ENCODE measurements at regions of chr21 and their contacts with region 1.

Region 1: GRCh38 chr21:38355992-38356797 is 99.4 kb downstream of the KCNJ15 start:
- DNase-seq: peak; percentile 85
- CTCF ChIP-seq: peak; percentile 88

Region 2: GRCh38 chr21:37711836-37712568 is 644.2 kb before region 1 on chr21:
- CTCF ChIA-PET with region 1: interaction called, 18 read pairs
- POLR2A ChIA-PET with region 1: no interaction called
- DNase-seq: peak; percentile 71
- CTCF ChIP-seq: peak; percentile 91

Region 3: GRCh38 chr21:38159355-38159754 is 196.8 kb before region 1 on chr21:
- CTCF ChIA-PET with region 1: interaction called, 96 read pairs
- POLR2A ChIA-PET with region 1: no interaction called
- DNase-seq: peak; percentile 64
- CTCF ChIP-seq: peak; percentile 81

Region 4: GRCh38 chr21:38219049-38219628 is 137.1 kb before region 1 on chr21:
- CTCF ChIA-PET with region 1: interaction called, 103 read pairs
- POLR2A ChIA-PET with region 1: no interaction called
- DNase-seq: peak; percentile 58
- CTCF ChIP-seq: peak; percentile 87

Region 5: DNA sequence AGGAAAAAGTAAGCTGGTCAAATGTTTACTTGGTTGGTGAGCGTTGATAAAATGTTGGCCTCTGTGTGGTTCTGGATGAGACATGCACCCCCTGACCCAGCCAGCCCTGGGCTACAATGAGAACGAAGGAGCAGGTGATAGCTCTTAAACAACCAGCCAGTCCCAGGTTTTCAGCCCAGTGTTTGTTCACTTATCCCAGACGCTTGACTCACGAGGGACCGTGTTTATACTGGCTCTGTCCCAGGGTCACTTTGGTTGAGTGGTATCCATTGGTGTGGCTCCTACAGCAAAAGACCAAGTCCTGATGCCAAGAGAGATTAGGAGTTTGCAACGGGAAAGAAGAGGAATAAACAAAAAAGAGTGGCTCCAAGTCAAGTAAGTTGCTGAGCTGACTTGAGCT is 12.5 kb before region 1 on chr21:
- CTCF ChIA-PET with region 1: interaction called, 18 read pairs
- POLR2A ChIA-PET with region 1: no interaction called
- DNase-seq: no peak
- CTCF ChIP-seq: no peak

Region 6: GRCh38 chr21:38470762-38471161 is 114.6 kb after region 1 on chr21:
- CTCF ChIA-PET with region 1: no interaction called
- POLR2A ChIA-PET with region 1: no interaction called
- DNase-seq: no peak
- CTCF ChIP-seq: no peak